HEK293T (cell line): ENCODE measurements at regions of chr2 and their contacts with region 1.

Region 1: DNA sequence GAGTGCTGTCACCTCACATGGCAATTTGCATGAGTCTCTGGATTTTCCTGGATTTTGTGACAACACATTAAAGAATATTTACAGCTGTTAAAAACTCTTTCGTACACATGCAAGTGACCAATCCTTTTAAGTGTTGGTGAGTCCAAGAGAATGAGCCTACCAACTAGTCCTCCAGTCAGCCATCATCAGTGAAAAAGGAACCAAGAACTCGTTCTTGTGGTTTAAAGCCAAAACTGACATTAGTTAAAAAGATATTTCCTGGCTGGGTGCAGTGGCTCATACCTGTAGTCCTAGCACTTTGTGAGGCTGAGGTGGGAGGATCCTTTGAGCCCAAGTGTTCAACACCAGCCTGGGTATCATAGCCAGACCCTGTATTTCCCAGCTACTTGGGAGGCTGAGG is 215.4 kb upstream of the ITGA4 start:
- DNase-seq: no peak

Region 2: GRCh38 chr2:181264001-181264400 is 22.2 kb after region 1 on chr2:
- CTCF ChIA-PET with region 1: interaction called, 11 read pairs
- POLR2A ChIA-PET with region 1: no interaction called
- DNase-seq: no peak

Region 3: GRCh38 chr2:181275643-181276070 is 33.9 kb after region 1 on chr2:
- CTCF ChIA-PET with region 1: no interaction called
- POLR2A ChIA-PET with region 1: no interaction called
- DNase-seq: no peak

Region 4: GRCh38 chr2:181810823-181811695 is 569.3 kb after region 1 on chr2:
- CTCF ChIA-PET with region 1: no interaction called
- POLR2A ChIA-PET with region 1: no interaction called
- DNase-seq: no peak